ENCODE measurements at regions of chr3 and their contacts with region 1.

Region 1: GRCh38 chr3:18389108-18389733 is 35.9 kb downstream of the SATB1 start:
- DNase-seq: no peak
- H3K4me3 Mint-ChIP-seq: no peak overlapping the region
- H3K27ac Mint-ChIP-seq: no peak overlapping the region
- H3K4me1 Mint-ChIP-seq: peaks cover 71% of the 10 kb centered on the region
- H3K27me3 Mint-ChIP-seq: no peaks in the 10 kb centered on the region

Region 2: DNA sequence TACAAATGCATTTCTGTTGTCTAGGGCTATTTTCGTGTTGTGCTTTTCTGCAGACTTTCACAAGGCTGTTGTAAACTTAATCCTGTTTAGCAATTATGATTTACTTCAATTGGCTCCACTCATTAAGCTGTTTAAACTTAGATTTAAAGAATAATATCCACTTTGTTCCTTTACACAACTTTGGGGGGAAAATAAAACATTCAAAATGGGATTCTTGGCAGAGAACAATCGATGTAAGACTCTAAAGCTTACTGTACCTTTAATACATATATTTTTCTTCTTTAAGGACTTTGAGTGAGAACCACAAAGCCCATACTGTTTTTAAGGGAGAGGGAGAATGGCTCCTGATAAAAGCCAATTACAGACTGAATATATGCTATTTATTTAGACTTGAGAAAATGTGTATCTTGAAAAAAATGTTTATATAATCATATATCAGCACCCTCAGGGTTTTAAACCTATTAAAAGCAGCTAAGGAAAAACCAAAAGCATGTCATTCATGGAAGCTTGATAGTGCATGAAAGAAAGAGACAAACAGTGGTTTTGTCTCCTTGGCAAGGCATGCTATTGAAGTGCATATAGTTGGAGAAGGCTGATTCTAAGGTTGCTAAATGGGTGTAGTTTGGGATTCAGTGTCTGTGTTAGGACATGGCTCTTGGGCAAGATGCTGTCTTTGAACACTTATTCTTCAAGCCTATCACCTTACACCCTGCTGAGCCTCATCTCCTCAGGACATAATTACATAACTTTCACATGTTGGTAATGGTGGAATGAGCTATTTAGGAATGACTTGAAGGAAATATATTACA is 353.4 kb before region 1 on chr3:
- intact Hi-C with region 1: no loop called
- DNase-seq: no peak
- H3K4me3 Mint-ChIP-seq: no peak overlapping the region
- H3K27ac Mint-ChIP-seq: no peak overlapping the region
- H3K4me1 Mint-ChIP-seq: no peaks in the 10 kb centered on the region
- H3K27me3 Mint-ChIP-seq: peaks cover 15% of the 10 kb centered on the region

Region 3: GRCh38 chr3:18372786-18373405 is 16.3 kb before region 1 on chr3:
- intact Hi-C with region 1: loop called (anchors 1 kb)
- DNase-seq: peak; percentile 20
- H3K4me3 Mint-ChIP-seq: peak overlapping the region; percentile 20
- H3K27ac Mint-ChIP-seq: peak overlapping the region; percentile 70
- H3K4me1 Mint-ChIP-seq: peaks cover 81% of the 10 kb centered on the region
- H3K27me3 Mint-ChIP-seq: no peaks in the 10 kb centered on the region

Region 4: GRCh38 chr3:18378218-18378617 is 11.0 kb before region 1 on chr3:
- intact Hi-C with region 1: loop called (anchors 1 kb)
- DNase-seq: no peak
- H3K4me3 Mint-ChIP-seq: no peak overlapping the region
- H3K27ac Mint-ChIP-seq: no peak overlapping the region
- H3K4me1 Mint-ChIP-seq: peaks cover 68% of the 10 kb centered on the region
- H3K27me3 Mint-ChIP-seq: no peaks in the 10 kb centered on the region

Region 5: DNA sequence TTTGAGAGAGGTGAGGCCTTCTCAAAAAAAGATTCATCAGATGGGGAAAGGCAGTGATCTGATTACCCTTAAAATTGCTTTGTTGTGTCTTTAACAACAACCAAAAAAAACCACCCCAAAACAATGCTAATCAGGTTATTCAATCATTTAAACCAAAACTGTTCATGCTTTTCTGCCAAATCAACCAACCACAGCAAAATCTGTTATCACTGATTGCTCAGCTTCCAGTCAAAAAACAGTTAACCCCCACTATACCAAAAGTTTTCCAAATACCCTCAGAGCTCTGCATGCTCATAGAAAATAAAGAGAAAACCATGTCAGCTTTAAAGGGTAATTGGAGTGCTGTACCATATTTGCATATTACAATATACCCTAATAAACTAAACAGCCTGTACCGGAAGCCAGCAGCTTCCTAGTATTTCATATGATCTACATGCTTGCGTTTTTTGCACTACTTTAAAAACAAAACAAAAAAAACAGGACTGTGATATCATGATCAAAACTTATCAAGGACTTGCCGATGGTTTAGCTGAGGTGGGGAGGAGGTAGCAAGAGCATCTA is 13.1 kb after region 1 on chr3:
- intact Hi-C with region 1: loop called (anchors 2 kb)
- DNase-seq: no peak
- H3K4me3 Mint-ChIP-seq: peak overlapping the region; percentile 55
- H3K27ac Mint-ChIP-seq: peak overlapping the region; percentile 92
- H3K4me1 Mint-ChIP-seq: peaks cover 92% of the 10 kb centered on the region
- H3K27me3 Mint-ChIP-seq: no peaks in the 10 kb centered on the region

Region 6: DNA sequence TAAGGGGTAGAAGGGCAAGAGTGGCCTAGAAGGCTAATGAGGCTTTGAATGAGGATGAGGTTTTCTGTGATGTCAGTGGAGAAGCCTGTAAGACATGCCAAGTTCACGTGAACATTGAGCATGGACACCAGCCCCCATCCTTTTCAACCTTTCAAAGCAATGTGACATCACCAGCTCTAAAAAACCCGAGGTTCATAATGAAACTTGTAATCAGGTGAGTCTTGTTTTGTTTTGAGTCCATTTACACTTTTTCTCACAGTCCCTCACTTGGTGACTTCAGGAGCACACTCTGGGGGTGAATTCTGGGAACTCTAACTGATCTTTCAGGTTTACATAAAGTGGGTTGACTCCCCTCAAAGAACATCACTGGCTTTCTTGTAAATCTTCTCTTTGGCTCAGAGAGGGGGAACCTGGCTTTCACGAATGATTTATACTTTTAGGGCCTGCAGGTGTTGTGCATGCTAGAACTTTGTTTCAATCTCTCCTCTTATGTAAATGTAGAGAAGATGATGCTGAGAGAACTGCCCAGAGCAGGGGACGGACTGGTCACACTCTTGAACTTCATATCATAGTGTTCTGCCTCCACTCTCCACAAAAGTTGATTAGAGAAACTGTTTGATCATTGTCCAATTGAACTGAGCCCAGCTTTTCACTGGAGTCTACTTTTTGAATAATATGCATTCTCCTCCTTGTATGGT is 260.6 kb after region 1 on chr3:
- intact Hi-C with region 1: no loop called
- DNase-seq: peak; percentile 49
- H3K4me3 Mint-ChIP-seq: peak overlapping the region; percentile 14
- H3K27ac Mint-ChIP-seq: peak overlapping the region; percentile 93
- H3K4me1 Mint-ChIP-seq: peaks cover 84% of the 10 kb centered on the region
- H3K27me3 Mint-ChIP-seq: no peaks in the 10 kb centered on the region